ENCODE measurements at regions of chr7 and their contacts with region 1.

Region 1: DNA sequence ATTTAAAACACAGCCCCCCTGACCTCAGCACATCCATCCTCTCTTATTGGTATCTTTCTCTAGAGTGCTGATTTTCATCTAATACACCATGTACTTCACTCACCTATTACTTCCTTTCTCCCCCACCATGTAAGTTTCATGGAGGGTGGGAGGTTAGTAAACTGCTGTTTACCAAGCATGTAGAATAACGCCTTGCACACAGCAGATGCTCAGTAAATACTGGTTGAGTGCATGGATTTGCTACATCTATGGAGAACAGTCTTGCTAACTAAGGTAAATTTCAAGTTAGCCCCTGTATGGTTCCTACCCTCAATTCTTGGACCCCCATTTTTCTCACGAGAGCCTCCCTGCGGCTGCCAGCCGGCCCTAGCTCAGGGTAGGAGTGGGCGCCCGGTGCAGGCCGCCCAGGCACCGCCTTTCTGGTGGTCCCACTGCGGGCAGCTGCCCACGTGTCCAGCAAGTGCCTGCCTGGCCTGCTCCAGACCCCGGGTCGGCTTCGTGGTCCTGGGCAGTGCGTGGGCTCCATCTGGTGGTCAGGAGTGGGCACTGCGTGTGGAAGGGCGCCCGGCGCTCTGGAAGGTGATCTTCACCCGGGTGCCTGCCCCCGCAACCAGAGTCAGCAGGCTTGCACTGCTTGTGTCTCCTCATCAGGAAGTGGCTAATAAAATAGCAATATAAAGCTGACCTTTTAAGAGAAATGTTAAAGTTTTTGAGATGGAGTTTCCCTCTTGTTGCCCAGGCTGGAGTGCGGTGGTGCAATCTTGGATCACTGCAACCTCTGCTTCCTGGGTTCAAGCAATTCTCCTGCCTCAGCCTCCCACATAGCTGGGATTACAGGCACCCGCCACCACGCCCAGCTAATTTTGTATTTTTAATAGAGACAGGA is 63.4 kb upstream of the DNAJB6 start:
- DNase-seq: peak; percentile 78
- H3K4me3 ChIP-seq: no peak overlapping the region
- H3K27ac ChIP-seq: peak overlapping the region in 1 of 2 donors; percentile 90
- H3K4me1 ChIP-seq: peaks cover 8% of the 10 kb centered on the region
- H3K27me3 ChIP-seq: no peaks in the 10 kb centered on the region
- CTCF ChIP-seq: peak; percentile 79 to 98 (median 88)
- POLR2A ChIP-seq: no peak

Region 2: DNA sequence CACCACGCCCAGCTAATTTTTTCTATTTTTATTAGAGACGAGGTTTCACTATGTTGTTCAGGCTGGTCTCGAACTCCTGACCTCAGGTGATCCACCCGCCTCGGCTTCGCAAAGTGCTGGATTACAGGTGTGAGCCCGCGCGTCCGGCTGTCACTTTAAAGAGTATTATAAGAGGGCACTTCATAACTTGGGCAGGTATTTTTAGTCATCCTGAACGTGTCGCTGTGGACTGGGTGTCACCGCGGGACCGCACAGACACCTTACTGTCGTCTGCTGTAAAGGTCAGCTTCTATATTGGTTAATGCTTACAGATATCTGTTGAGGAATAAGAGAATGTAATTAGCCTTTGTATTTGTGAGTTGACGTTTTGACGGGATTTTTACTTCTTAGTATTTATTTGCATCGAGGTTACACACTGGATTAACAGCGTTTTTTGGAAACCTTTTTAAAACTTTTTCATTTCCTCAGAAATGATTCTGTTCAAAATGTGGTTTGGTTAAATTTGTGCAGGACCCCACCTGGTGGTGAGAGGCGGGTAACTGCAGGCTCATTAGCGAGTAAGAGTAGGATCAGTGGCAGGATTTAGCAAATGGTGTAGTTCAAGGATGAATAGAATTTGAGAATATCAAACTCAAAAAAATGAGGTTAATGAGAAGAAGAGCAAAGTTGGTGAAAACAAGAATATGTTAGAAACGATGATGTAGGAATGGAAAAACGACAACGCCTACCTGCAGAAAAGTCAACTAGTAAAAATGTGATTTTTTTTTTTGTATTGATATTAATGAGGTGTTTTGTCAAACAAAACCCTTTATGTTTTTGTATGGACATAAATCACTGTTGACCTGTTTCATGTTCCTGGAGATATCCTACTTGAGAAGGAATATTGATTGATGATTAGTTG is 66.6 kb after region 1 on chr7:
- intact Hi-C with region 1: loop called (anchors 10 kb)
- DNase-seq: peak; percentile 78
- H3K4me3 ChIP-seq: no peak overlapping the region
- H3K27ac ChIP-seq: no peak overlapping the region
- H3K4me1 ChIP-seq: peaks cover 9% of the 10 kb centered on the region
- H3K27me3 ChIP-seq: no peaks in the 10 kb centered on the region
- CTCF ChIP-seq: peak; percentile 86 to 91 (median 91)
- POLR2A ChIP-seq: no peak